Gastrocnemius medialis (tissue), 4 donors: ENCODE measurements at regions of chr11 and their contacts with region 1.

Region 1: DNA sequence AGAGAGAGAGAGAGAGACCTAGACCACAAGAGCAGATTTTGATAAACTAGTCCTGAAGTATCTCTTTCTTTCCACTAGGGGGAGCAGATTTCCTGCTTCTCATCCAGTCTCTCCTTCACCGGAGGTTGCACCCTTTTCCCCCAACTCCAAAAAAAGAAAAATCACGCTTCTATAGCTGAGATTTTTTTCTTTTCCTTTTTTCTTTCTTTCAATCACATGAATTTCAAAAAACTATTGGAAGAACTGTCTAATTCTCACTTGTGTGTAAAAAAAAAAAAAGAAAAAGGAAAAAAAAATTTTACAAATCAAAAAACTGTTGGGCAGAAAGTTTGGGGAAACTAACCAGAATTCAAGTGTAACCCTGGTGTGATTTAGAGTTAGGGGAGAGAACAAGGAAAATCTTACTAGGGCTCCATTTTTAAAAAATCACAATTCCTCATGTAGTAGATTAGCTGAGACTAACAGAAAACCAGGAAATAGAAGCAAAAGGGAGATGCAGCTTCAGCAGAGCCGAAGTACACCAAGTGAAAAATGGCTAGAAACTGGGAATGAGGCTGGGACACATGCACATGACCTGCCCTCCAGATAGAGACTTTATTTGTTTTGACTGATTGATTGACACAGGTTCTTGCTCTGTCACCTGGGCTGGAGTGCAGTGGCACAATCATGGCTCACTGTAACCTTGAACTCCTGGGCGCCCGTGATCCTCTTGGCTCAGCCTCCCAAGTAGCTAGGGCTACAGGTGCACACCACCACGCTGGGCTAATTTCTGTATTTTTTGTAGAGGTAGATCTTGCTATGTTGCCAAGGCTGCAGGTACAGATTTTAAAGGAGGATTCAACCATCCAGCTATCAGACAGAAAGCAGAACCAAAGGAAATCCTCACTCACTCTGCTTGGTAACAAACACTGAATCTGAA is 27.1 kb downstream of the SDHD start:
- DNase-seq: peak in 1 of 2 donors; percentile 11
- ATAC-seq: peak; percentile 81 to 87
- H3K4me3 ChIP-seq: no peak overlapping the region
- H3K27ac ChIP-seq: no peak overlapping the region
- H3K4me1 ChIP-seq: peaks cover 0 to 3% of the 10 kb centered on the region in 2 donors
- H3K27me3 ChIP-seq: no peaks in the 10 kb centered on the region
- CTCF ChIP-seq: peak; percentile 39 to 75 (median 55)
- POLR2A ChIP-seq: no peak

Region 2: DNA sequence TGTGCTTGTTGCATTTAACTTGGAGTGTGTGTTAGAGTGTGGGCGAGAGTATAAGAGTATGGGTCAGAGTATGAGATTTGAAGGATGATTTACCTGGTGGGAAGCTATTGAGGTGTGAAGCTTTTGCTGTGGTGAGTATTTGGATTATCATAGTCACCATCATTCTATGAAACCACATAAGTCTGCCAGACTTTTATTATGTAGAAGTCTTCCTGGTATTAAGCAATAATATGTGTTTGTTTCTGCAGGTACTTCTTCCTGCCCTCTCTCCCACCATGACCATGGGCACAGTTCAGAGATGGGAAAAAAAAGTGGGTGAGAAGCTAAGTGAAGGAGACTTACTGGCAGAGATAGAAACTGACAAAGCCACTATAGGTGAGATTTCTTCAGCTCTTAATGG is 80.6 kb before region 1 on chr11:
- in situ Hi-C with region 1: no loop called
- intact Hi-C with region 1: no loop called
- DNase-seq: no peak
- ATAC-seq: no peak
- H3K4me3 ChIP-seq: no peak overlapping the region
- H3K27ac ChIP-seq: peak overlapping the region; percentile 41 to 77 (median 61)
- H3K4me1 ChIP-seq: peaks cover 6 to 10% of the 10 kb centered on the region in 2 donors
- H3K27me3 ChIP-seq: no peaks in the 10 kb centered on the region
- CTCF ChIP-seq: no peak
- POLR2A ChIP-seq: no peak

Region 3: GRCh38 chr11:112128483-112129121 is 14.8 kb after region 1 on chr11:
- in situ Hi-C with region 1: no loop called
- intact Hi-C with region 1: no loop called
- DNase-seq: peak; percentile 43 to 61
- ATAC-seq: peak; percentile 67 to 75
- H3K4me3 ChIP-seq: no peak overlapping the region
- H3K27ac ChIP-seq: no peak overlapping the region
- H3K4me1 ChIP-seq: peaks cover 0 to 22% of the 10 kb centered on the region in 2 donors
- H3K27me3 ChIP-seq: no peaks in the 10 kb centered on the region
- CTCF ChIP-seq: no peak
- POLR2A ChIP-seq: no peak

Region 4: GRCh38 chr11:112174789-112175598 is 61.2 kb after region 1 on chr11 and contains the start of gene BCO2:
- in situ Hi-C with region 1: loop called (anchors 5 to 10 kb)
- intact Hi-C with region 1: loop called (anchors 1 kb)
- DNase-seq: peak; percentile 72 to 87
- ATAC-seq: peak; percentile 95 to 97
- H3K4me3 ChIP-seq: peak within 1 kb of the TSS; percentile 35 to 54 (median 45)
- H3K27ac ChIP-seq: peak within 1 kb of the TSS; percentile 72 to 81 (median 74)
- H3K4me1 ChIP-seq: peaks cover 33 to 37% of the 10 kb centered on the region in 2 donors
- H3K27me3 ChIP-seq: no peaks in the 10 kb centered on the region
- CTCF ChIP-seq: peak; percentile 81 to 96 (median 84)
- POLR2A ChIP-seq: peak in 1 of 2 donors; percentile 21
- total RNA-seq, gene BCO2: 2.9 to 5.8 (median 4.2) TPM

Region 5: DNA sequence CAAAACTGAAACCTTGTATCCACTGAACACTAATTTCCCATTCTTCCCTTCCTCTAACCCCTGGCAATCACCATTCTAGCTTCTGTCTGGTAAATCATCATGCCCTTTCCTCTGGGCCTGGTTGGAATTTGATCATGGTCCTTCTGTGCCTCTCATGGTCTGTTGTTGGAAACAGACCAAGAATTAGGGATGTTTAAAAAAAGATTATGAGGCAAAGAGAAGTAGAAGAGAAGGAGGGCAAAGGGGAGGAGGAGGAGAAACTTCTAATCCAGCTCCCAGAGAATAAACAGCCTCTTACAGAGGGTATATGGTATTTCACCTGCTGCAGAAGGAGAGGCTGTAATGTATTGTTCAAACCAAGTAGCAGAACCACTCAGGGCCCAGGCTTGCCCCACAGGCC is 72.1 kb after region 1 on chr11:
- in situ Hi-C with region 1: loop called in 1 of 4 experiments (anchors 10 kb)
- intact Hi-C with region 1: no loop called
- DNase-seq: no peak
- ATAC-seq: peak; percentile 52 to 74
- H3K4me3 ChIP-seq: no peak overlapping the region
- H3K27ac ChIP-seq: peak overlapping the region; percentile 42 to 70 (median 53)
- H3K4me1 ChIP-seq: peaks cover 15 to 17% of the 10 kb centered on the region in 2 donors
- H3K27me3 ChIP-seq: no peaks in the 10 kb centered on the region
- CTCF ChIP-seq: no peak
- POLR2A ChIP-seq: no peak

Region 6: GRCh38 chr11:112280268-112281126 is 166.7 kb after region 1 on chr11:
- in situ Hi-C with region 1: no loop called
- intact Hi-C with region 1: loop called (anchors 5 kb)
- DNase-seq: peak; percentile 35 to 59
- ATAC-seq: peak; percentile 84 to 96
- H3K4me3 ChIP-seq: peak overlapping the region; percentile 43 to 67 (median 60)
- H3K27ac ChIP-seq: peak overlapping the region in 1 of 4 donors; percentile 29
- H3K4me1 ChIP-seq: peaks cover 0 to 4% of the 10 kb centered on the region in 2 donors
- H3K27me3 ChIP-seq: no peaks in the 10 kb centered on the region
- CTCF ChIP-seq: peak; percentile 48 to 73 (median 66)
- POLR2A ChIP-seq: no peak